ENCODE measurements at regions of chr1 and their contacts with region 1.

Region 1: GRCh38 chr1:153670859-153671627 is at the start of gene ILF2:
- DNase-seq: peak; percentile 96
- H3K4me3 Mint-ChIP-seq: no peak within 1 kb of the TSS
- H3K27ac Mint-ChIP-seq: peak within 1 kb of the TSS; percentile 56
- H3K4me1 Mint-ChIP-seq: peaks cover 29% of the 10 kb centered on the region
- H3K27me3 Mint-ChIP-seq: no peaks in the 10 kb centered on the region
- total RNA-seq, gene ILF2: 354 and 366 TPM in 2 replicates

Region 2: DNA sequence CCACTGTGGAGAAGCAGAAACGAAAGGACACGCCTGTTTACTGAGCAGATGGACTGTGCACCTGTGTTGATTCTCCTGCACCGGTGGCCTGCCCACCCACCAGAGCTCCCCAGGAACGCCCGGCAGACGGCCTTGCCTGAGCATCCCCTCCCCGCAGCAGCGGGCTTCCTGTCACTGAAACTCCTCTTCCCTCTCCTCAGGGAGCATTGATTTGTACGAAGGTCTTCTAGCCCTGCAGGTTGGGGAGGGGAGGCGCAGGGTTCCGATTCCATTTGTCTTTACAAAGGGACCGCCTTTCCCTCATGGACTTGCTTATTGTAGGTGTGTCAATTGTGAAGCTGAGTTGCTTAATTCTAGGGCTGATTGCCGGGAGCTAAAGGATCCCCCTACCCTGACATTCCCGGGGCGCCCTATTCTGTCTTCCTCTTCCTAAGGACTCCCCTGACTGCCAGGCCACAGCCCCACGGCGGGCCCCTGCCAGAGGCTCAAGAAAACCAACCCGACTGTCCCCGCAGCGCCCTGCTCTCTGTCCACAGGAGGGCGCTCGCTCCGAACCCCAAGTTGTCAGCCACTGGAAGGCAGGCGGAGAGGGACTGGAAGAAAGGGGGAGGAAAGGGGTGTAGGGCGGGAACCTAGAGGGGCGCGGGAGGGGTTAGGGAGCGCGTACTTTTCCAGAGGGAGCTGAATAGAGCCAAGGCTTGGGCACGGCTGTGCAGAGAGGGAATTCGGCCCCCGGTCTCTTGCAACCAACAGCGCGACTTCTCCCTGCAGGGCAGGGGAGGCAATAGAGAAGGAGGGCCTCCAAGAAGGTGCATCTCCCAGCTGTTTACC is 138.1 kb before region 1 on chr1:
- intact Hi-C with region 1: loop called (anchors 2 kb)
- DNase-seq: peak; percentile 72
- H3K4me3 Mint-ChIP-seq: peak overlapping the region; percentile 91
- H3K27ac Mint-ChIP-seq: peak overlapping the region; percentile 83
- H3K4me1 Mint-ChIP-seq: peaks cover 62% of the 10 kb centered on the region
- H3K27me3 Mint-ChIP-seq: no peaks in the 10 kb centered on the region

Region 3: GRCh38 chr1:153633716-153634665 is 37.1 kb before region 1 on chr1 and contains the start of gene CHTOP:
- intact Hi-C with region 1: loop called (anchors 1 kb)
- DNase-seq: peak; percentile 96
- H3K4me3 Mint-ChIP-seq: peak within 1 kb of the TSS; percentile 97
- H3K27ac Mint-ChIP-seq: peak within 1 kb of the TSS; percentile 100
- H3K4me1 Mint-ChIP-seq: peaks cover 45% of the 10 kb centered on the region
- H3K27me3 Mint-ChIP-seq: no peaks in the 10 kb centered on the region
- total RNA-seq, gene CHTOP: 101 and 105 TPM in 2 replicates

Region 4: GRCh38 chr1:153775458-153776327 is 104.7 kb after region 1 on chr1:
- intact Hi-C with region 1: loop called (anchors 1 kb)
- DNase-seq: peak; percentile 56
- H3K4me3 Mint-ChIP-seq: peak overlapping the region; percentile 80
- H3K27ac Mint-ChIP-seq: peak overlapping the region; percentile 44
- H3K4me1 Mint-ChIP-seq: peaks cover 25% of the 10 kb centered on the region
- H3K27me3 Mint-ChIP-seq: no peaks in the 10 kb centered on the region

Region 5: GRCh38 chr1:153977250-153978240 is 306.5 kb after region 1 on chr1 and contains the start of gene JTB:
- intact Hi-C with region 1: loop called (anchors 1 kb)
- DNase-seq: peak; percentile 80
- H3K4me3 Mint-ChIP-seq: peak within 1 kb of the TSS; percentile 94
- H3K27ac Mint-ChIP-seq: peak within 1 kb of the TSS; percentile 95
- H3K4me1 Mint-ChIP-seq: peaks cover 33% of the 10 kb centered on the region
- H3K27me3 Mint-ChIP-seq: no peaks in the 10 kb centered on the region
- total RNA-seq, gene JTB: 198 and 213 TPM in 2 replicates

Region 6: GRCh38 chr1:155323798-155324610 is 1653.0 kb after region 1 on chr1:
- intact Hi-C with region 1: loop called (anchors 10 kb)
- DNase-seq: peak; percentile 90
- H3K4me3 Mint-ChIP-seq: peak overlapping the region; percentile 86
- H3K27ac Mint-ChIP-seq: peak overlapping the region; percentile 75
- H3K4me1 Mint-ChIP-seq: peaks cover 40% of the 10 kb centered on the region
- H3K27me3 Mint-ChIP-seq: no peaks in the 10 kb centered on the region

Measured in activated T-helper 1 cell treated with anti-CD3 and anti-CD28 coated beads, Interleukin-12 subunit alpha, Interleukin-12 subunit beta, Interleukin-2, Interleukin-4 antibody, amounts not matched to agents 30 ng/mL and 10 ng/mL and 1 ng/mL, durations not matched to agents 14 hours and 24 hours and 36 hours (primary cell).